T-cell (primary cell): ENCODE measurements at regions of chr3 and their contacts with region 1.

Region 1: GRCh38 chr3:59857589-59858346 is 807.9 kb upstream of the CFAP20DC start:
- DNase-seq: peak; percentile 43 to 85 (median 69)
- ATAC-seq: peak; percentile 83 to 95 (median 94)
- H3K4me3 ChIP-seq: no peak overlapping the region
- H3K4me3 Mint-ChIP-seq: no peak overlapping the region
- H3K27ac ChIP-seq: no peak overlapping the region
- H3K27ac Mint-ChIP-seq: no peak overlapping the region
- H3K4me1 ChIP-seq: no peaks in the 10 kb centered on the region
- H3K4me1 Mint-ChIP-seq: peaks cover 5 to 44% (median 17%) of the 10 kb centered on the region in 3 donors
- H3K27me3 ChIP-seq: no peaks in the 10 kb centered on the region
- H3K27me3 Mint-ChIP-seq: no peaks in the 10 kb centered on the region

Region 2: GRCh38 chr3:59212128-59212779 is 645.5 kb before region 1 on chr3:
- CTCF ChIA-PET with region 1: interaction called, 3 to 10 read pairs
- POLR2A ChIA-PET with region 1: no interaction called
- DNase-seq: peak in 3 of 35 experiments; percentile 16 to 63 (median 21)
- ATAC-seq: peak; percentile 34 to 71 (median 58)
- H3K4me3 ChIP-seq: no peak overlapping the region
- H3K4me3 Mint-ChIP-seq: no peak overlapping the region
- H3K27ac ChIP-seq: no peak overlapping the region
- H3K27ac Mint-ChIP-seq: no peak overlapping the region
- H3K4me1 ChIP-seq: peaks cover 0 to 2% of the 10 kb centered on the region in 2 experiments
- H3K4me1 Mint-ChIP-seq: peaks cover 0 to 2% (median 0%) of the 10 kb centered on the region in 3 donors
- H3K27me3 ChIP-seq: no peaks in the 10 kb centered on the region
- H3K27me3 Mint-ChIP-seq: peaks cover 5 to 6% of the 10 kb centered on the region in 2 donors

Region 3: GRCh38 chr3:59575113-59576001 is 282.4 kb before region 1 on chr3:
- CTCF ChIA-PET with region 1: interaction called, 4 to 29 read pairs
- POLR2A ChIA-PET with region 1: no interaction called
- DNase-seq: peak; percentile 60 to 89 (median 80)
- ATAC-seq: peak; percentile 69 to 88 (median 78)
- H3K4me3 ChIP-seq: no peak overlapping the region
- H3K4me3 Mint-ChIP-seq: no peak overlapping the region
- H3K27ac ChIP-seq: no peak overlapping the region
- H3K27ac Mint-ChIP-seq: no peak overlapping the region
- H3K4me1 ChIP-seq: peaks cover 2 to 7% of the 10 kb centered on the region in 2 experiments
- H3K4me1 Mint-ChIP-seq: peaks cover 0 to 11% (median 3%) of the 10 kb centered on the region in 3 donors
- H3K27me3 ChIP-seq: no peaks in the 10 kb centered on the region
- H3K27me3 Mint-ChIP-seq: peaks cover 2 to 3% of the 10 kb centered on the region in 2 donors

Region 4: GRCh38 chr3:59839810-59840515 is 17.8 kb before region 1 on chr3:
- CTCF ChIA-PET with region 1: interaction called, 3 to 10 read pairs
- POLR2A ChIA-PET with region 1: no interaction called
- DNase-seq: peak in 3 of 35 experiments; percentile 0 to 21 (median 3)
- ATAC-seq: peak; percentile 61 to 75 (median 72)
- H3K4me3 ChIP-seq: no peak overlapping the region
- H3K4me3 Mint-ChIP-seq: no peak overlapping the region
- H3K27ac ChIP-seq: no peak overlapping the region
- H3K27ac Mint-ChIP-seq: peak overlapping the region in 1 of 2 donors; percentile 11
- H3K4me1 ChIP-seq: peaks cover 9 to 12% of the 10 kb centered on the region in 2 experiments
- H3K4me1 Mint-ChIP-seq: peaks cover 21 to 55% (median 45%) of the 10 kb centered on the region in 3 donors
- H3K27me3 ChIP-seq: no peaks in the 10 kb centered on the region
- H3K27me3 Mint-ChIP-seq: no peaks in the 10 kb centered on the region

Region 5: GRCh38 chr3:59908280-59908679 is 50.5 kb after region 1 on chr3:
- CTCF ChIA-PET with region 1: no interaction called
- POLR2A ChIA-PET with region 1: no interaction called
- DNase-seq: no peak
- ATAC-seq: no peak
- H3K4me3 ChIP-seq: no peak overlapping the region
- H3K4me3 Mint-ChIP-seq: no peak overlapping the region
- H3K27ac ChIP-seq: no peak overlapping the region
- H3K27ac Mint-ChIP-seq: peak overlapping the region in 1 of 2 donors; percentile 11
- H3K4me1 ChIP-seq: no peaks in the 10 kb centered on the region
- H3K4me1 Mint-ChIP-seq: peaks cover 2 to 31% (median 28%) of the 10 kb centered on the region in 3 donors
- H3K27me3 ChIP-seq: no peaks in the 10 kb centered on the region
- H3K27me3 Mint-ChIP-seq: no peaks in the 10 kb centered on the region

Region 6: GRCh38 chr3:61008998-61009380 is 1151.2 kb after region 1 on chr3:
- CTCF ChIA-PET with region 1: interaction called in 1 of 2 experiments, 10 read pairs
- POLR2A ChIA-PET with region 1: no interaction called
- DNase-seq: peak in 2 of 35 experiments; percentile 0 to 15
- ATAC-seq: no peak
- H3K4me3 ChIP-seq: no peak overlapping the region
- H3K4me3 Mint-ChIP-seq: no peak overlapping the region
- H3K27ac ChIP-seq: no peak overlapping the region
- H3K27ac Mint-ChIP-seq: no peak overlapping the region
- H3K4me1 ChIP-seq: no peaks in the 10 kb centered on the region
- H3K4me1 Mint-ChIP-seq: peaks cover 0 to 6% (median 0%) of the 10 kb centered on the region in 3 donors
- H3K27me3 ChIP-seq: no peaks in the 10 kb centered on the region
- H3K27me3 Mint-ChIP-seq: no peaks in the 10 kb centered on the region